Activated CD4-positive, alpha-beta memory T cell treated with anti-CD3 and anti-CD28 coated beads for 36 hours (primary cell): ENCODE measurements at regions of chr6 and their contacts with region 1.

Region 1: DNA sequence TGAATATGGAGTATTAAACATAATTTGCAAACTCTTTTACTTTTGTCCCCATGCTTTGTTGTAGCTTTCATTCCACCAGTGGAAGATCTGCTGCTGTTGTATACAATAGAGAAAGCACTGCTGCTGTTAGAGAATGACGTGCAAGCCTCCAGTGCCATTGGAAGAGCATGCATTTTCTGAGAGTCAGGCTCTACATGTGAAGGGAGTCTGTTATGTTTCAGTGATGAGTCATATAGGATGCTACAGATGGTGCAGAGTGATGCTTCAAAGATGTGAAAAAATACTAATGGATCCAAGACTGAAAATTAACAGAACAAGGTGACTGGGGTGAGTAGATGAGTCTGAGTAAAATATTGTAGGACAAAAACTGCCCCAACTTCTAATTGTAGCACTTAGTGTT is 22.4 kb upstream of the BACH2 start:
- DNase-seq: peak; percentile 51
- H3K4me3 Mint-ChIP-seq: no peak overlapping the region
- H3K27ac Mint-ChIP-seq: peak overlapping the region; percentile 59
- H3K4me1 Mint-ChIP-seq: peaks cover 29% of the 10 kb centered on the region
- H3K27me3 Mint-ChIP-seq: peaks cover 3% of the 10 kb centered on the region

Region 2: GRCh38 chr6:90230548-90231215 is 88.4 kb before region 1 on chr6:
- CTCF ChIA-PET with region 1: no interaction called
- POLR2A ChIA-PET with region 1: no interaction called
- intact Hi-C with region 1: no loop called
- DNase-seq: no peak
- H3K4me3 Mint-ChIP-seq: no peak overlapping the region
- H3K27ac Mint-ChIP-seq: no peak overlapping the region
- H3K4me1 Mint-ChIP-seq: peaks cover 88% of the 10 kb centered on the region
- H3K27me3 Mint-ChIP-seq: no peaks in the 10 kb centered on the region

Region 3: DNA sequence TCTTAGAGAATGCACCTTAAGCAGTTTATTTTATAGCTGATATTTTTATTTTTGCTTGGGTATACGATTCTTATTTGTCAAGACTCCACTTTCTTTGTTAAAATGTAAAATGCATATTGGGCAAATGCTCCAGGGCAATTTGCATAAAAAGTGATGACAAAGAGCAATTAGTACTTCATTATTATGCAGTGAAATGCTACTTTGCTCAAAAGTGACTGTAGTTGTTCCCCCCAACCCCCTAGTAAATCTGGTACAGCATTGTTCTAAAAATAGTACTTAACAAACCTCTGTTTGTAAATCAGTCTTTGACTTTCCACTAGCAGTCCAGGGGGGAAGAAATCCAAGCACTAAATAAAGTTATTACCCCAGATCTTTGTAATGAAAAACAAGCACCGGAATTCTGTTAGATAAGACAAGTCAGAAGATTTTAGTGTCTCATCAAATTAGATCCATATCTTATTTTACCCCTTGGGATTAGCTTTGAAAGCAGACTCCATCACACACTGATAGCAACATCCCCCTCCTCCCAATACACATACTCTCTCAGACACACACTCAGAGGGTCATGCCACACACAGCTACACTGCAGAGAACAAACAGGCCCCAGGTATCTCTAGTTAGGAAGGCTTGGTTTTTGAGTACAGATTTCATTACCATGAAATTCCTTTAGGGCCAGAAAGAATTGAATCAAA is 10.5 kb after region 1 on chr6:
- CTCF ChIA-PET with region 1: no interaction called
- POLR2A ChIA-PET with region 1: no interaction called
- intact Hi-C with region 1: no loop called
- DNase-seq: no peak
- H3K4me3 Mint-ChIP-seq: no peak overlapping the region
- H3K27ac Mint-ChIP-seq: no peak overlapping the region
- H3K4me1 Mint-ChIP-seq: peaks cover 21% of the 10 kb centered on the region
- H3K27me3 Mint-ChIP-seq: no peaks in the 10 kb centered on the region

Region 4: GRCh38 chr6:90369024-90369519 is 50.0 kb after region 1 on chr6:
- CTCF ChIA-PET with region 1: no interaction called
- POLR2A ChIA-PET with region 1: no interaction called
- intact Hi-C with region 1: loop called (anchors 1 kb)
- DNase-seq: peak; percentile 63
- H3K4me3 Mint-ChIP-seq: no peak overlapping the region
- H3K27ac Mint-ChIP-seq: peak overlapping the region; percentile 35
- H3K4me1 Mint-ChIP-seq: peaks cover 20% of the 10 kb centered on the region
- H3K27me3 Mint-ChIP-seq: no peaks in the 10 kb centered on the region

Region 5: DNA sequence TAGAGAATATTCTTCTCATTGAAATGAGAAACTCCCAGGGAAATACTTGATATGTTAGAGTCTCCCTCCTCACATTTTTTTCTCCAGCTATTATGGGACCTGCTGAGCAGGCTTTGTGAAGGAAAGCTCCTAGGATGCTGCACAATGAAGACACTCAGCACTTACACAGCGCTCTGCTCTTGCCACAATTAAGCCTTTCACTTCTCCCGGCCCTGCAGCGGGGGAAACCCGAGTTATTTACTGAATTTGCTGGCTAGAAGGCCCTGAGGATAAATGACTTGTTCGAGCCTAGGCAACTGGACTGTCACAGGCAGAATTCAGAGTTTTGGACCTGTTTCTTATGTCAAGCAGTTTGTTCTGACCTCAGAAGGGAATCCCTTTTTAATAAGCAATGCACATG is 165.9 kb after region 1 on chr6:
- CTCF ChIA-PET with region 1: no interaction called
- POLR2A ChIA-PET with region 1: no interaction called
- intact Hi-C with region 1: no loop called
- DNase-seq: no peak
- H3K4me3 Mint-ChIP-seq: no peak overlapping the region
- H3K27ac Mint-ChIP-seq: no peak overlapping the region
- H3K4me1 Mint-ChIP-seq: peaks cover 22% of the 10 kb centered on the region
- H3K27me3 Mint-ChIP-seq: no peaks in the 10 kb centered on the region